ENCODE measurements at regions of chr20 and their contacts with region 1.

Region 1: DNA sequence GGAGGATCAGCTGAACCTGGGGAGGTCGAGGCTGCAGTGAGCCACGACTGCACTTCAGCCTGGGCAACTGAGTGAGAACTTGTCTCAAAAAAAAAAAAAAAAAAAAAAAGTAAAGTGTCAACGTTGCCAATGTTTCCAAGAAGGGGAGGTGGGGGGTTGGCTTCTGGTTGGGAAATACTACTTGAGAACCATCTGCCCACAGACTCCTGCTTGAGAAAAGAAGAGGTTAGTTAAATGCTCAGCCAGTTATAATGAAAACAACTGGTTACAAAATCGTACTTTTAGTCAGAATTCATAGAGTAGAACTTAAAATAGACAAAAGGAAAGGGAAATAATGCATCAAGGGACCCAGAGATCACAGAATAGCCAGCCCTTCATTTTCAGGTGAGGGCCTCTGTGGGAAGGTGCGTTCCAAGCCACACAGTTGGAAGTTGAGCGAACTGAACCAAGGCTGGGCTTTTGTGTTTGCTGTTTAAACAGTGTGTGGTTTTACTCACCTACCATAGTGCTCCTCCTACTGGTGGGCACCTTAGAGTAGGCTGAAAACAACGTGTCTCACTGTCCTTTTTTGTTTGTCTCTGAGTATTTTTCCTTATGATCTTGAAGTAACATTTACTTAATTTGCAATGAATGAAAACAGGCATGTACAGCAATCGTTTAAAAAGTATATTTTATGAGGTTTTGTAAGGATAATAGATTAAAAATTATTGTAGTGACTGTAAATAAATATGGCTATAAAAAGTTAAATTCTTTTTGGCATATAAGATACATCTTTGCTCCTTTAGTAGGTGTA is 200.7 kb downstream of the BCAS1 start:
- DNase-seq: peak; percentile 93
- H3K4me3 ChIP-seq: peak overlapping the region; percentile 18
- H3K27ac ChIP-seq: peak overlapping the region; percentile 92
- H3K4me1 ChIP-seq: peaks cover 89% of the 10 kb centered on the region
- CTCF ChIP-seq: peak; percentile 98

Region 2: GRCh38 chr20:53652090-53652858 is 217.4 kb before region 1 on chr20:
- CTCF ChIA-PET with region 1: no interaction called
- POLR2A ChIA-PET with region 1: interaction called, 6 read pairs
- intact Hi-C with region 1: loop called (anchors 2 kb)
- DNase-seq: peak; percentile 77
- H3K4me3 ChIP-seq: peak overlapping the region; percentile 50
- H3K27ac ChIP-seq: peak overlapping the region; percentile 91
- H3K4me1 ChIP-seq: peaks cover 59% of the 10 kb centered on the region
- CTCF ChIP-seq: no peak

Region 3: DNA sequence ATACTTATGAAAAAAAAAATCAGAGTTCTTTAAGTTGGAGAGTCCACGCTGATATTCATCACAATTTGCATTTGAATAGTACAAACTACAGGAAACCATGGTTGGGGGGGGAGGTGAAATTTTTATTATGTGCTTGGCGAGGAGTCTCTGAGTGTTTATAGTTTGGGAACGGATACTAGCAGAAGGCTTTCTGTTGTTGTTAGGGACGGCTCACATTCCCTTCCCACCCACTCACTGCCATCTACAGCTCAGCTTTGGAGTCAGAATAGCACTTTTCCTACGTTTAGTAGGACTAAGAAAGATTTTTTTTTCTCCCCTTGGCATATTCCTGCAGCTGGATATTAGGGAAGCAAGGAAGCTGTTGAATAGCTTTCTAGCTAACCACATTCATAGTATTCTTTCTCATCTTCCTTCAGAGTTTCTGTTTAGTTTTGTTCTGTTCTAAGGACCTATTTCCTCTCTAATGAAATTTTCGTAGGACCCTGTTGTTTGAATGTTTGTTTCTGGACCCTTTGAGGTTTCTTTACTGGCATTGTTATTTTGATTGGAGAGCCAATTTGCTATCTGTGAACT is 40.9 kb before region 1 on chr20:
- CTCF ChIA-PET with region 1: no interaction called
- POLR2A ChIA-PET with region 1: interaction called, 8 read pairs
- intact Hi-C with region 1: loop called (anchors 1 kb)
- DNase-seq: peak; percentile 50
- H3K4me3 ChIP-seq: peak overlapping the region; percentile 60
- H3K27ac ChIP-seq: peak overlapping the region; percentile 89
- H3K4me1 ChIP-seq: peaks cover 73% of the 10 kb centered on the region
- CTCF ChIP-seq: no peak; the same call in 1 of the 2 replicates

Region 4: GRCh38 chr20:53857723-53858236 is 11.9 kb before region 1 on chr20:
- CTCF ChIA-PET with region 1: interaction called, 3 read pairs
- POLR2A ChIA-PET with region 1: interaction called, 139 read pairs
- intact Hi-C with region 1: no loop called
- DNase-seq: no peak
- H3K4me3 ChIP-seq: no peak overlapping the region
- H3K27ac ChIP-seq: no peak overlapping the region
- H3K4me1 ChIP-seq: peaks cover 20% of the 10 kb centered on the region
- CTCF ChIP-seq: no peak

Region 5: DNA sequence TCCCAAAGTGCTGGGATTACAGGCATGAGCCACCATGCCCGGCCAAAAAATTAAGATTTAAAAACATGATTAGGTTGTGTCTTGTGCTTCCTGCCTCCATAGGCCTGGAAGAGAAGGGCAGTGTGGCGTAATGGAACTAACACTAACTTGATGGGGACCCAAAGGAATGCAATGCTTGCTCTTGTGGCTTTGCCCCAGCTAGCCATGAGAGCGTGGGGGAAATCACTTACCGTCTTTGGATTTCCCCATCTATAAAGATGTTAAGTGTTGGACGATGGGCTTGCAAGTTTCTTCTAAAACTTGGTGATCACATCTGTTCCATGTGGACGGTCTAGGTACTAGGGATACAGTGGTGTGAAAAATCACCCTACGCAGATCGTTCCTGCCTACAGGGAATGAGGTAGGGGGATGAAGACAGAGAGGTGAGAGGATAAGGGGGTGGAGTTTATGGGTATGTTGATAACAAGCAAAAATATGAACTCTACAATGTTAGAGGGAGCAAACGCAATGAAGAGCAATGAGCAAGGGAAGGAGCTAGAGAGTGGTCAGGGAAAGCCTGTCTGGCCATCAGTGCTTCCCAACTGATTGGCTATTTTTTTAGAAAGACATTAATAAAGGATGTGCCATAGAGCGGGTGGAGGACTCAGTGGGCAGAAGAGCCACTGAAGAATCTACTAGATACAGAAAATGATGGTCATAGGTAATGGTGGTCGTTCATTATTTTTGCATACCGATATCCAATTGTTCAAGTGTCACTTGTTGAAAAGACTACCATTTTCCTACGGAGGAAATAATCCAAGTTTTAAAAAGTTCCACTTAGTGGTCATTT is 35.6 kb after region 1 on chr20:
- CTCF ChIA-PET with region 1: interaction called, 4 read pairs
- POLR2A ChIA-PET with region 1: interaction called, 41 read pairs
- intact Hi-C with region 1: no loop called
- DNase-seq: no peak
- H3K4me3 ChIP-seq: no peak overlapping the region
- H3K27ac ChIP-seq: no peak overlapping the region
- H3K4me1 ChIP-seq: peaks cover 72% of the 10 kb centered on the region
- CTCF ChIP-seq: no peak

Region 6: DNA sequence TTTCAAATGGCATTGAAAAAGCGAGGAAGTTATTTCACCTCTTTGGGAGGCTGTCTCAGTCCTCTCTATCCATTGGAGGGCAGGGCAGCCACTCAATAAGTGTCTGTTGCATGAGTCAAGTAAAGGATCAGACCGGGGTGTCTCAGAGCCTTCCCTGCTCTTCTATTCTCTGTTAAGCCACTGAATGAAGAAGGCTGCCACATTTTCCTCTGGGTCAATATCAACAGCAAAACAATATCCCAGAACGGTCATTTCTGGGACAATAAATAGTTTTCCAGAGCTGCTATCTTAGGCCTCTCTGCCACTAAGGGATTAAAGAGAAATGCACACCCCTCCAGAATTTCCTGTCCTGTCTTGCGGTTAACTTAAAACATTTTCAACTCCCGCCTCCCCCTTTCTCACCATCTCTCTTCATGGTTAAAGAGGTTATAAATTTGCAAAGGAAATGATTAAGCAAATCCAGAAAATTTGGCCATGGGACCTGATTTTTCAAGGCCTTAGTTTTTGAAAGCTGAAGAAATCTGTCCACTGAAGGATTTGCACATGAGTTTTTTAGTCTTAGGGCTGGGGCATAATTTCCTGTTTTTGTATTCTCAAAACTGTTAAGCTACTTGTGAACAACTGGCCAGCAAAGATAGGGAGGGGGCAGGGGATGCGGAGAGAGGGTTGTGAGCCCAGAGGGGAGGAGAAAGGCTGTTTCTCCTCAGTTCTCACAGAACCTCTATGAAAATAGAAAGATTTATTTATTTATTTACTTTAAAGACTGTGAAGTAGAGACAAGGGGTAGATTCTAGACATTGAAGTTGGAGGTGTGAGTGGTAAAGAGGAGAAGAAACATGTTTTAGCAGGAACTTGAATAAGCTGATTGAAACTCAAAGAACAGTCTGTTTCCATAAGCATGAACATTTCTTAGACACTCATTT is 65.0 kb after region 1 on chr20:
- CTCF ChIA-PET with region 1: interaction called, 3 read pairs
- POLR2A ChIA-PET with region 1: interaction called, 15 read pairs
- intact Hi-C with region 1: loop called (anchors 5 kb)
- DNase-seq: peak; percentile 88
- H3K4me3 ChIP-seq: peak overlapping the region; percentile 51
- H3K27ac ChIP-seq: peak overlapping the region; percentile 94
- H3K4me1 ChIP-seq: peaks cover 81% of the 10 kb centered on the region
- CTCF ChIP-seq: no peak